AG04450 (cell line): ENCODE measurements at regions of chr1 and their contacts with region 1.

Region 1: DNA sequence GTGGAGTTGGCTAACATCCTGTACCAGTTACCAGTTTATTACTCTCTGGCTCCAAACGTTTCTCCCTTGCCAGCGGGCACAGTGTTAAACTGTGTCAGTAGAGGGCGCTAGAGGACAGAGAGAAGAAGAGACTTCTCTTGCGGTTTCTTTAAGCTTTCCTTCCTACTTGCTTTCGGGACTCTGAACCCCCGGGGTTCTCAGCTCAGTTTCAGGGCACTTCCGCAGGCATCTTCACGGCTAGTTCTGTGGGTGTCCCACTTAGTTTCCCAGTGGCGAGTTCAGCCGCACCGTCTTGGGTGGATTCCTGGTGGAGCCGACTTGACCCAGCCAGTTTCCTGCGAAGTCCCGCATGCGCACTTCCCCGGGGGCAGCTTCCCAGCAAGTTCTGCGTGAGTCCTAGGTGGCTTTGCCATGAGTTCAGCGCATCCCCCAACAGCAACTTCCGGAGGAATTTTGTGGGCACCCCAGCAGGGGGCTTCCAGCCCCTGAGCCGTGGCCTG is 37.9 kb upstream of the BTG2 start:
- DNase-seq: peak; percentile 57
- H3K4me3 ChIP-seq: peak overlapping the region; percentile 79
- H3K27ac ChIP-seq: no peak overlapping the region
- H3K27me3 ChIP-seq: peaks cover 16% of the 10 kb centered on the region
- CTCF ChIP-seq: peak; percentile 97

Region 2: DNA sequence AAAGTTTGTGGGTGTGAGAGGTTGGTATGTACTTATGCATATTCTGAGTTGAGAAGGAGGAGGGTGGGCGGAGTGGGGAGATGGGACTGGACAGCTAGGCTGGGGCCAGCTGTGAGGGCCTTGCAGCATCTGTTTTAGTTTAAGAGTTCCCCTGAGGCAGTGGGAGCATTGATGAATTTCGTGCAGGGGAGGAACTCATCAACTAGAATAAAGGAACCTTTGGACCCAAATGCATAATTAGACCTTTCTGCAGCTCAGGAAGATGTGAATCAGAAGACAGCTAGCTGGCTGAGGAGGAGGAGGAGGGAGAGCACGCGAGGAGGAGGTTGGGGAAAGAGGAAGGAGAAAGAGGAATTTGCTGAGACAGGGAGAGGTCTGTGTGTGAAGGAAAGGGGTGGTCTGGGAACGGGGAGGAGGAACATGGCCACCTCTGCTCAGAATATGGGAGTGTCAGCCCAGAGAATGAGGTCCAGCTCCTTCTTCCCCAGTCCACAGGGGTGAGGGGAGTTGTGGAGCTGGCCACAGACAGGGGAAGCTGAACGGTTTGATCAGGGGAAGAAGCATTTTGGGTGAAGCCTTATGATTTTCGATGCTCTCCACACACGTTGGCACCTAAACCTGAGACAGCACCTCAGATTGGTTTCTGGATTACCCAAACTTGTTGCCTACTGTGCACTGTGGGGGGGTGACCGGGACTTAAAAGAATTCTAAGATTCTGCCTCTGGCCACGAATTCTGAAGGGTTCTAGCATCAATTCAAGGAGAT is 209.3 kb before region 1 on chr1:
- CTCF ChIA-PET with region 1: interaction called, 11 read pairs
- POLR2A ChIA-PET with region 1: no interaction called
- DNase-seq: no peak
- H3K4me3 ChIP-seq: no peak overlapping the region
- H3K27ac ChIP-seq: no peak overlapping the region
- H3K27me3 ChIP-seq: peaks cover 20% of the 10 kb centered on the region
- CTCF ChIP-seq: no peak

Region 3: GRCh38 chr1:203117611-203118575 is 149.5 kb before region 1 on chr1:
- CTCF ChIA-PET with region 1: interaction called, 164 read pairs
- POLR2A ChIA-PET with region 1: interaction called, 7 read pairs
- DNase-seq: peak; percentile 21
- H3K4me3 ChIP-seq: no peak overlapping the region
- H3K27ac ChIP-seq: no peak overlapping the region
- H3K27me3 ChIP-seq: peaks cover 50% of the 10 kb centered on the region
- CTCF ChIP-seq: peak; percentile 85

Region 4: GRCh38 chr1:203239526-203240305 is 27.7 kb before region 1 on chr1:
- CTCF ChIA-PET with region 1: interaction called, 12 read pairs
- POLR2A ChIA-PET with region 1: no interaction called
- DNase-seq: no peak
- H3K4me3 ChIP-seq: no peak overlapping the region
- H3K27ac ChIP-seq: no peak overlapping the region
- H3K27me3 ChIP-seq: peaks cover 12% of the 10 kb centered on the region
- CTCF ChIP-seq: no peak

Region 5: DNA sequence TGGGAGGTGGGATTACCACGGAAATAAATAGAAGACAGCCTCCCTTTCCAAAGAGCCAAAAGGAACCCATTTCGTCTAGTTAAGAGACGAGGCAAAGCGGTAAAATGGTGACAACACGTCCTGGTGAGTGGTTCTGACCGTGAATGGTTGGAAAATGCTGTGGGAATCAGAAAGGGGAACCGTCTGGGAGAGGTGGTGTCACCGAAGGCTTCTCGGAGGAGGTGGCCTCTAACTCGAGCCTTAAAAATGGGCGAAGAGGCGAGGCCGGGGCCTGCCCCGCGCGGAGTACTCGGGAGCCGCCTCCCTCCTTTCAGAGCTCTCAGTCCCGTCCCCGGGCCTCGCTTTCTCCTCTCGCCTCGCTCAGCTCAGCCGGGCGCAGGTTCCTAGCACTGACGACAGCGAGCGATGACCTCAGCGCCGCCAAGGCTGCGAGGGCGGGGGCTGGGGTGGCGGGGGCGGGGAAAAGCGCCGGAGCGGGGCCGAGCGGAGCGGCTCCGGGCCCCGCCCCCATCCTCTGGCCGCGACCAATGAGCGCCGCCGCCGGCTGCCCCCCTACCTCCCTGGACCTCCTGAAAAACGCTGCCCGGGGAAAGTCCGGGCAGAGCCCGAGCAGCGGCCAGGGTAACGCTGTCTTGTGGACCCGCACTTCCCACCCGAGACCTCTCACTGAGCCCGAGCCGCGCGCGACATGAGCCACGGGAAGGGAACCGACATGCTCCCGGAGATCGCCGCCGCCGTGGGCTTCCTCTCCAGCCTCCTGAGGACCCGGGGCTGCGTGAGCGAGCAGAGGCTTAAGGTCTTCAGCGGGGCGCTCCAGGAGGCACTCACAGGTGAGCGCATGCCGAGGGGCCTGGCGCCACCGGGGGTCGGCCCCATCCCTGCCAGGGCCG is 37.8 kb after region 1 on chr1 and contains the start of gene BTG2:
- CTCF ChIA-PET with region 1: interaction called, 29 read pairs
- POLR2A ChIA-PET with region 1: interaction called, 3 read pairs
- DNase-seq: peak; percentile 61
- H3K4me3 ChIP-seq: peak within 1 kb of the TSS; percentile 87
- H3K27ac ChIP-seq: peak within 1 kb of the TSS; percentile 68
- H3K27me3 ChIP-seq: peaks cover 19% of the 10 kb centered on the region
- CTCF ChIP-seq: no peak
- polyA plus RNA-seq, gene BTG2: 34.7 and 36.5 TPM in 2 replicates

Region 6: GRCh38 chr1:203493901-203494300 is 226.5 kb after region 1 on chr1 and contains the start of gene OPTC:
- CTCF ChIA-PET with region 1: interaction called, 10 read pairs
- POLR2A ChIA-PET with region 1: no interaction called
- DNase-seq: no peak
- H3K4me3 ChIP-seq: no peak within 1 kb of the TSS
- H3K27ac ChIP-seq: no peak within 1 kb of the TSS
- H3K27me3 ChIP-seq: peaks cover 7% of the 10 kb centered on the region
- CTCF ChIP-seq: no peak
- polyA plus RNA-seq, gene OPTC: not detected in 2 replicates